Activated B cell treated with CpG ODN at 0.5 μM for 24 hours (primary cell): ENCODE measurements at regions of chr11 and their contacts with region 1.

Region 1: DNA sequence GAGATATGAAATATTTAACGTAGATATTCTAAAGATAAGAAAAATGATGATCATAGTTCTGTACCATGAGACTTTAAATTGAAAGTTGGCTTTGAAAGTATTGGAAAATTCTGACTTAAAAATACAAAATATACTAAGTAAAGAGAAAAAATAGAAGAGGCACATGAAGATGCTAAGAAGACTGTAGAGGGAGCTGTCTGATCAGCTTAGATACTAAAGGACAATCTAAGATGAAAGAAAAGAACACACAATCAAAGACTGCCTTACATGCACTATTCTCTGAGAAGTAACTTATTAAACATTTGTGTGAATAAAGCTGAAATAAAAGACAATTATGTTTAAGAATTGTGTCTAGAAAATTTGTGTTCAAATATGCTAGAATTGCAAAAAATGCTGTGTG is 55.1 kb downstream of the RBMXL2 start:
- DNase-seq: no peak
- ATAC-seq: no peak
- H3K4me3 Mint-ChIP-seq: no peak overlapping the region
- H3K27ac Mint-ChIP-seq: no peak overlapping the region
- H3K4me1 Mint-ChIP-seq: no peaks in the 10 kb centered on the region
- H3K27me3 Mint-ChIP-seq: peaks cover 12% of the 10 kb centered on the region
- CTCF ChIP-seq: no peak

Region 2: DNA sequence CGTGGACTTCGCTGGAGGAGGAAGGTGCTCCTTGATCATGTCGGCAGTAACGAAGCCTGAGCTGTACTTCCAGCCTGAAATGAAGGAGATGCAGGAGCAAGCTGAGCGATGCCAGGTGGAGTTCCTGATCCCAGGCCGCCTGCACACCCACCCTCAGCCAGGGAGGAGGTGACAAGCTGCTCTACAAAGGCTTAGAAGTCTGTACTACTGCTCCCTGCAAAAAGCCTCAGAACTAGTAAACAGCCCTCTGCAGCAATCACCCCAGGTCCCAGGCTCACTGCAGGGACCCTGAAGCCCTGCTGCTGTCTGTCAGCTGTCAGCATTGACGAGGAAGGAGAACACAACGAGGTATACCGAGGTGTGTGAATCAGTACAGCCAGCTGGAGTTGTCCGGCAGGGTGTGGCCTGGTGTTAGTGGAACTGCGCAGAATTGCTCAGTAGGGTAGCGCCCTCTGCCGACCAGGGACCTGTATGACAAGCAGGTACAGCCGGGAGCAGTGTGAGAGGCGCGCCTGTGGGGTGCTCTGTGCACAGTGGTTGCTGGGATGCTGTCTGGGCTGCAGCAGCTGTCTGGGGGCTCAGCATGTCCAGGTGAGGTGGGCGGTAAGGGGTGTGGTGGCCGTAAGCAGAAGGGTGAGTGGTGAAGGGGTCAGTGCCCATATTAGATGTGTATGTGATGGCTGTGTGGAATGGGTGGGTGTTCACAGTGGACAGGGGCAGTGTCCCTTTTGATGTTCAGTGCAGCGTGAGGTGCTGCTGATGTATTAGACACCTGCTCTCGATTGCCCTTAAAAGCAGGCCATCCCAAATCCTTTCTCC is 521.8 kb after region 1 on chr11:
- CTCF ChIA-PET with region 1: interaction called, 5 read pairs
- POLR2A ChIA-PET with region 1: no interaction called
- intact Hi-C with region 1: loop called (anchors 5 kb)
- DNase-seq: peak; percentile 75
- ATAC-seq: peak; percentile 99
- H3K4me3 Mint-ChIP-seq: no peak overlapping the region
- H3K27ac Mint-ChIP-seq: no peak overlapping the region
- H3K4me1 Mint-ChIP-seq: peaks cover 5% of the 10 kb centered on the region
- H3K27me3 Mint-ChIP-seq: no peaks in the 10 kb centered on the region
- CTCF ChIP-seq: peak; percentile 51